Activated CD8-positive, alpha-beta T cell treated with anti-CD3 and anti-CD28 coated beads, Interleukin-2, amount 10 ng/mL, durations not matched to agents 7 days and 5 days (primary cell): ENCODE measurements at regions of chr10 and their contacts with region 1.

Region 1: GRCh38 chr10:103685880-103686669 is 169.3 kb downstream of the SH3PXD2A start:
- DNase-seq: peak; percentile 83
- ATAC-seq: peak; percentile 88
- H3K4me3 Mint-ChIP-seq: no peak overlapping the region
- H3K27ac Mint-ChIP-seq: no peak overlapping the region
- H3K4me1 Mint-ChIP-seq: peaks cover 9% of the 10 kb centered on the region
- H3K27me3 Mint-ChIP-seq: peaks cover 3% of the 10 kb centered on the region

Region 2: GRCh38 chr10:103592186-103593021 is 93.7 kb before region 1 on chr10:
- CTCF ChIA-PET with region 1: interaction called, 38 read pairs
- POLR2A ChIA-PET with region 1: no interaction called
- DNase-seq: peak; percentile 64
- ATAC-seq: peak; percentile 73
- H3K4me3 Mint-ChIP-seq: no peak overlapping the region
- H3K27ac Mint-ChIP-seq: no peak overlapping the region
- H3K4me1 Mint-ChIP-seq: peaks cover 5% of the 10 kb centered on the region
- H3K27me3 Mint-ChIP-seq: no peaks in the 10 kb centered on the region

Region 3: DNA sequence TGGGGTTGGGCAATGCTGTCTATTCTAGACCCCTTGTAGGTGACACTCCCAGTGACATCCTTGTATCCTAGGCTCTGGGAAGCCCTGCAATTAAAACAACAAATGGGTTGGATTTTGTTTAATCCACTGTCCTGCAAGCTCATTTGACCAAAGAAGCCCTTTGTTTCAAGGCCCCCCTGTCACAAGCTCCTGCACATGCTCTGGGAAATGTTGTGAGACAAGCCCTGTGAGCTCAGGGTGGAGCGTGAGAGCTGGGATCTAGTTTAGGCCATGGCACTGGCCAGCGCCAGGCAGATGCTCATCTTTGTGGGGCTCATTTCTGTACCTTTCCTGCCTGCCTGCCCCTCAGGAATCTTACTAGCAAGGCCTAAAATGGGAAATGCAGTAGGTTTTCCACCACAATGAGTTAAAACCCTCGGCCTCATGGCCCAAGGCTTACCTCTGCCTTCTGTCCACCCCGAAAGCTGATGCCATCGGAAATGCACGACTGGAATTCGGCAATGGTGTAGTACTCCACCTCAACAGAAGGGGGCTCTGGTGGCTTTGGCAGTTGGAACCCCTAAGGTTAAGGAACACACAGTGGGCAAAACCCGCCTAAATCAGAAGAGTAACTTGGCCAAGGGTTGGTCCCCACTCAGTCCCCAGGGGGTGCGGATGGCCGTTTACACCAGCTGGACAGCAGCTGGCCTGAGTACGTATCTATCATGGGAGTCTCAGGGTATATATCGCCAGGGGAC is 80.5 kb before region 1 on chr10:
- CTCF ChIA-PET with region 1: interaction called, 55 read pairs
- POLR2A ChIA-PET with region 1: no interaction called
- DNase-seq: peak; percentile 55
- ATAC-seq: peak; percentile 47
- H3K4me3 Mint-ChIP-seq: no peak overlapping the region
- H3K27ac Mint-ChIP-seq: no peak overlapping the region
- H3K4me1 Mint-ChIP-seq: no peaks in the 10 kb centered on the region
- H3K27me3 Mint-ChIP-seq: no peaks in the 10 kb centered on the region

Region 4: DNA sequence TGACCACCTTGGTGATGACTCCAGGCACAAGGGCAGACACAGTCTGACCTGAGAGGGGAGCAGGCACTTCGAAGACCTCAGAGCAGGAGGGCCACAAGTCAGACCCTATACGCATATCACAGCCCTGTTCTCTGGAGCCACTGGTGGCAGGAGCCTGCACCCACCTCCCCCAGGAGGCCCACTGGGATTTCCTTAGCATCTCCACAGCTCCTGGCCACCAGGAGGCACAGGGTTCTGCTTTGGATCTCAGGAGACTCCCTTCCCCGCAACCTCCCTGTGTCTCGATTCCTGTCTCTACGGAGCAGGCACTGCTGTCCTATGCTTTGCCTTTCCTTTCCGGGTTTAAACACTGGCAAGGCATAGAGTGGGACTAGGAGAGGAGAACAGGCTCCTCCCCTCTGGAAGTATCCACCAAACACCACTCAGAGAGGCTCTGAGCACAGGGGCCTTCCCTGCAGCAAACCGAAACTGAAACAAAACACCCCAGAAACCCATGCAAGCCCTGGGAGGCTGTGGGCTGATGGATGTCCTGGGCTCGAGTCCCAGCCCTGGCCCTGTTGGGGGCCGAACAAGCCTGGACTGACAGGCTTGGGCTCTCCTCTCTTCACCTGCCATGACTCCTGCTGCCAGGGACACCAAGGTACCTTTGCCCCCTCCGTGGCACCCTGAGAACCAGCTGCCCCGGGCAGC is 26.3 kb before region 1 on chr10:
- CTCF ChIA-PET with region 1: interaction called, 36 read pairs
- POLR2A ChIA-PET with region 1: interaction called, 3 read pairs
- DNase-seq: peak; percentile 81
- ATAC-seq: peak; percentile 93
- H3K4me3 Mint-ChIP-seq: peak overlapping the region; percentile 89
- H3K27ac Mint-ChIP-seq: peak overlapping the region; percentile 89
- H3K4me1 Mint-ChIP-seq: peaks cover 19% of the 10 kb centered on the region
- H3K27me3 Mint-ChIP-seq: no peaks in the 10 kb centered on the region

Region 5: DNA sequence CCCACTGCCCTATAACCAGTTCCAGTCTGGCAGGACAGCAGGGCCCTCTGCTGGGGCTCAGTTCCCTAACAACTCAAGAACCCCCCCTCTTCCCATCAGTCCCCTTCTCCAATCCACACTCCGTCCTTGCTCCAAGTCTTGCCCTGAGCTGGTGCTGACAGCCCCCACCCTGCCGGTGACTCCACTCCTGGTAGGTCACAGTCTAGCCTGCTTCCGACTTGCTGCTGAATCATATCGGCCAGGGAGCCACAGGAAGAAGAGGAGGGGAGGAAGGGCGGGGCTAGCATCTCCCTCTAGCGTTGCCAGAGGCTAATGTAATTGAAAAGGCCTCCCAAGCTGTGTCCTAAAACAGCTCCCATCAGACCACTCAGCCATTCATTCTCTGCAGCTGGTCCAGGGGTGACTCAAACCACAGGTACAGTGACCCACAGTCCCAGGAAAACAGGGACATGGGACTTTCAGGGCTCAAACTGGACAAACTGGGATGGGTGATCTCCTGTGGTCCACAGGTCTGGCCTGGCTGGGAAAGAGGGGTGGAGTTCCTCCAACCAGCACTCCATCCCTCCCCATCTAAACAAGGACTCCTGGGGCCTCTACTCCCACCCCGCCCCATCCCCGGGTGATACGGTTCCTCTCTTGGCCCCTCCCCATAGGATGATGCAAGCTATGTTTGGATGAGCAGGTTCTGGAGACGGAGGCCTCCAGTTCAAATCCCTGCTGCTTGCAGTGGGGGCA is 10.5 kb after region 1 on chr10:
- CTCF ChIA-PET with region 1: interaction called, 47 read pairs
- POLR2A ChIA-PET with region 1: interaction called, 3 read pairs
- DNase-seq: peak; percentile 87
- ATAC-seq: peak; percentile 79
- H3K4me3 Mint-ChIP-seq: peak overlapping the region; percentile 71
- H3K27ac Mint-ChIP-seq: peak overlapping the region; percentile 90
- H3K4me1 Mint-ChIP-seq: peaks cover 50% of the 10 kb centered on the region
- H3K27me3 Mint-ChIP-seq: no peaks in the 10 kb centered on the region